ENCODE measurements at regions of chr15 and their contacts with region 1.

Region 1: DNA sequence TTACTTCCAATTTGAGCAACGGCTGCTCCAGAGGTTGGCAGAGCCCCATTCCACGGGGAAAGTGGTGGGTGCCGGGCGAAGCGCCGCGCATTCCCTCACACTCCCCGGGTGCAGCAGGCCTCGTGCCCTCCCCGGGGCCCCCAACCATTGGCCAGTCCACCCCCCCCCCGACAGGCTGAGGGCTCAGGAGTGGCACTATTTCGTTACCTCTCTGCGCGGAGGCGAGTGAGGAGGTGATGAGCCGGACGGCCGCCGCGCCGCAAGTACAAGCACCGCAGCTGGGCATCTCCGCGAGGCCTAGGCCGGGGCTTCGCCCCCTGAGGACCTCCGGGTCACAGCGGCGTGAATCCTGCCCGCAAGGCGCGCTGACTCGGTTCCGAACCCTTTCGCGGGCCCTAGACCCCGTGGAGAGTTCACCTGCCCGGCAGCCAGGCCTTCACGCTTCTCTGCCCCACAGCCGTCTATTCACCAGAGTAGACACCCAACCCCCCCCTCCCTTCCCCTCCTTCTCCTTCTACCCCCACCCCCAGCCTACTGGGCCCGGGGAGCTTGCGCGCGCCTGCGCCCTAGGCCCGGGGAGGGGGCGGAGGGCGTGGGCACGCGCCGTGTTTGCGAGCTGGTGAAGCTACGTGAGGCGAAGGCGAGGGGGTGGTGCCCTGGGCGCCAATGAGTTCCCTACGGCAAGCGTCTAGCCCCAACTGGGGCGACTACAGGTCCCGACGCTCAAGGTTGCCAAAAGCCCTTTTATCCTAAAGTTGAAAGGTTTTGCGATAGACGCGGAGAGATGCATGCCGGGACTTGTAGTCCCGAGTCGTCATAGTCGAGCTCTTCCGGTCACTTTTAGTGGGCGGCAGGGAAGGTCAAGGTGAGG is at the start of gene CLPX:
- DNase-seq: peak; percentile 93 to 96
- ATAC-seq: peak; percentile 93
- total RNA-seq, gene CLPX: 49.2 to 51.9 TPM

Region 2: DNA sequence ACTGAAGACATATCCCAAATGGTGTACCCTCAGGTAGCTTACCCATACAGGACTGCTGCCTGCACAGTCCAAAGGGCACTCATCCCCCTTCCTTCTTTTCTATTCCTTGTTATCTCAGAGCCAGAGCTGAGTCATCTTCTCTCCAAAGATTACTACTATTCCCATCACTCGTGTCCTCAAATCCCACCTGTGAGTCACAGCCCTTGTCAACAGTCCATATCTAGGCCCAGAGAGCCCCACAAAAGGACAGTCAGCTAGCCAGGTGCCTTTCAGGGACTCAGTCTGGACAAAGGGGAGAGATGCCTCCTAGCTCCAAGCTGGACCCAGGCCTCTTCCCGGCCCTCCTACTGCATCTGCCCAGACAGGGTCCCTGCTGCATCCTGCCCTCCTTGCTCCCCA is 90.6 kb after region 1 on chr15:
- intact Hi-C with region 1: loop called (anchors 2 to 5 kb)
- DNase-seq: no peak
- ATAC-seq: peak; percentile 13